Activated T-helper 1 cell treated with anti-CD3 and anti-CD28 coated beads, Interleukin-12 subunit alpha, Interleukin-12 subunit beta, Interleukin-2, Interleukin-4 antibody, amounts not matched to agents 30 ng/mL and 10 ng/mL and 1 ng/mL, durations not matched to agents 14 hours and 24 hours and 36 hours (primary cell): ENCODE measurements at regions of chrX and their contacts with region 1.

Region 1: GRCh38 chrX:15158736-15159406 is 111.0 kb downstream of the ASB9 start:
- DNase-seq: peak; percentile 14
- H3K4me3 Mint-ChIP-seq: peak overlapping the region; percentile 86
- H3K27ac Mint-ChIP-seq: peak overlapping the region; percentile 88
- H3K4me1 Mint-ChIP-seq: peaks cover 24% of the 10 kb centered on the region
- H3K27me3 Mint-ChIP-seq: no peaks in the 10 kb centered on the region

Region 2: DNA sequence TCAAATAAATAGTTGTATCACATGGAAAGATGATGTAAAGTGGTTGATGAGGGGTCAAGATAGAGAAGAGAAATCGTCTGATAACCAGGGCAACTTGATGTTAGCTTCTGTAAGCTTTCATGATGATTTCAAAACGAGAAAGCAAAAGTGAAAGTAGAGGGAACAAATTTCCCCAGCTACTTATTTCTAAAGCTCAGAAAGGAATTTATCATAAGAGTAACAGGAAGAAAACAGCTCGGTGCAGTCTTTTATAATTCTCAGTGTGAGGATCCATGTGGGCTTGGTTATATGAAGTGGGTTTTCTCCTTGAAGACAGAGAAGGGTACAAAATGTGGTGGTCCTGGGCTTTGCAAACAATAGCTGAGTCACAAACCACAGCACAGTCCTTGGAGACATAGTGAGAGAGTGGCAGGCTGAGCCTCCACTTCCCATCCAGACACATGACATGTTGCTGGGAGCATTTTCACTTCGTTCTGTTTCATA is 661.6 kb before region 1 on chrX:
- intact Hi-C with region 1: loop called (anchors 5 kb)
- DNase-seq: no peak
- H3K4me3 Mint-ChIP-seq: peak overlapping the region; percentile 75
- H3K27ac Mint-ChIP-seq: peak overlapping the region; percentile 80
- H3K4me1 Mint-ChIP-seq: peaks cover 13% of the 10 kb centered on the region
- H3K27me3 Mint-ChIP-seq: no peaks in the 10 kb centered on the region

Region 3: GRCh38 chrX:14798805-14799397 is 360.0 kb before region 1 on chrX:
- intact Hi-C with region 1: loop called (anchors 5 kb)
- DNase-seq: no peak
- H3K4me3 Mint-ChIP-seq: no peak overlapping the region
- H3K27ac Mint-ChIP-seq: peak overlapping the region; percentile 42
- H3K4me1 Mint-ChIP-seq: peaks cover 8% of the 10 kb centered on the region
- H3K27me3 Mint-ChIP-seq: no peaks in the 10 kb centered on the region

Region 4: DNA sequence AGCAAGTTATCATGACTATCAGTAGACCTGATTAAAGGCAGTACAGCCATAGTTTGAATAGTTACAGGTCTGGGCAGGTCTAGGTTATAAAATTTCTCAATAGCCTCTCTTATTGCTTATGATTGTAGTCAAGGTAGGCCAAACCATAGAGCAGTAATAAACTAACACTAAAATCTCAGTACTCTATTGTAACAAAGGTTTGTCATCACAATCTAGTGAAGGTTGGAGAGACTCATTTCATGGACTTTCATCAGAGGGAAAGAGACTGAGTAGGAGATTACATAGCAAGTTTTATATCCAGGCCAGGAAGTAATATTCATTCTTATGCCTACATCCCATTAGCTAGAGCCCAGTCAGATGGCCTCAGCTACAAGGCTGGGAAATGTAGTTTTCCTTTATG is 30.0 kb before region 1 on chrX:
- intact Hi-C with region 1: loop called (anchors 1 kb)
- DNase-seq: no peak
- H3K4me3 Mint-ChIP-seq: no peak overlapping the region
- H3K27ac Mint-ChIP-seq: no peak overlapping the region
- H3K4me1 Mint-ChIP-seq: peaks cover 7% of the 10 kb centered on the region
- H3K27me3 Mint-ChIP-seq: peaks cover 4% of the 10 kb centered on the region